H1 (cell line): ENCODE measurements at regions of chr11 and their contacts with region 1.

Region 1: GRCh38 chr11:19814421-19814820 is 101.8 kb downstream of the NAV2 start:
- DNase-seq: no peak
- H3K4me3 ChIP-seq: no peak overlapping the region
- H3K27ac ChIP-seq: no peak overlapping the region
- H3K4me1 ChIP-seq: peaks cover 28 to 50% (median 42%) of the 10 kb centered on the region in 4 experiments
- H3K27me3 ChIP-seq: no peaks in the 10 kb centered on the region
- CTCF ChIP-seq: peak; percentile 53 to 75 (median 69)
- EP300 ChIP-seq: no peak
- POLR2A ChIP-seq: no peak
- RAD21 ChIP-seq: peak; percentile 80 to 86

Region 2: GRCh38 chr11:19664896-19665548 is 149.4 kb before region 1 on chr11:
- CTCF ChIA-PET with region 1: no interaction called
- POLR2A ChIA-PET with region 1: no interaction called
- DNase-seq: no peak
- H3K4me3 ChIP-seq: no peak overlapping the region
- H3K27ac ChIP-seq: no peak overlapping the region
- H3K4me1 ChIP-seq: no peaks in the 10 kb centered on the region
- H3K27me3 ChIP-seq: no peaks in the 10 kb centered on the region
- CTCF ChIP-seq: no peak
- EP300 ChIP-seq: no peak
- POLR2A ChIP-seq: no peak
- RAD21 ChIP-seq: no peak

Region 3: GRCh38 chr11:19777377-19778102 is 36.9 kb before region 1 on chr11:
- CTCF ChIA-PET with region 1: interaction called, 4 read pairs
- POLR2A ChIA-PET with region 1: interaction called, 10 read pairs
- DNase-seq: no peak
- H3K4me3 ChIP-seq: peak overlapping the region; percentile 84 to 96 (median 90)
- H3K27ac ChIP-seq: peak overlapping the region; percentile 92
- H3K4me1 ChIP-seq: peaks cover 17 to 43% (median 37%) of the 10 kb centered on the region in 4 experiments
- H3K27me3 ChIP-seq: no peaks in the 10 kb centered on the region
- CTCF ChIP-seq: no peak
- EP300 ChIP-seq: peak in 1 of 2 experiments; percentile 7; a peak in 1 of 3 replicates
- POLR2A ChIP-seq: peak; percentile 78 to 81
- RAD21 ChIP-seq: no peak

Region 4: DNA sequence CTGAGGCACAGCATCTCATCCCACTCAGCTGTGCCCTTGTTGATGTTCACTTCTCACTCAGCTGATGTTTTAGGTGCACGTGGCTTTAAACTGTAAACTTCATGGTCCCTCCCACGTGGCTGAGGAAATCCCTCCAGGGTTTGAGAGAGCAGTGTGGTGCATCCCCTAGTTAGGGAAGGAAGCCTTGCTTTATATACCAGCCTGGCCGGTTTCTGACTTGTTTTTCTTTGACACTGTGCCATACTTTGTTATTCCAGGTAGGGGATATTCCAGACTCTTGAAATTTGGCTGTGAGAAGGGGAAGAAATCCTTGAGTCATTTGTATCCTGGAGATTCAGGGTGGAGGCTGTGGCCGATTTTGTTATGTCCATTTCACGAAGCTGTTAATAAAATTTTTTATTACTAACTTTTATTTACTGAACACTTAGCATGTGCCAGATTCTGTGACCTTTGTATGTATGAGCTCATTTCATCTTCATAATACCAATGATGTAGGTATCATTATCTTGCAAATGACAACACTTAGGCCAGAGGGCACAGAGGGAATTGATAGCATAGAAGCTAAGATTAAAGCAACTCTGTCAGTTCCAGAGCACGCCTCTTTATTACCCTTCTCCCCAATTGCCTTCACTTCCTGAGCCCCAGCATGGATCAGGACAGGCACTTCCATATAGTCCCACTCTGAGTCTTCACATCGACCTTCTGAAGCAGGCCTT is 14.8 kb after region 1 on chr11:
- CTCF ChIA-PET with region 1: interaction called, 44 read pairs
- POLR2A ChIA-PET with region 1: interaction called, 37 read pairs
- DNase-seq: no peak
- H3K4me3 ChIP-seq: no peak overlapping the region
- H3K27ac ChIP-seq: 0 out of 2 replicates have a peak overlapping the region, but pooled peaks have one; percentile 17
- H3K4me1 ChIP-seq: peaks cover 2 to 35% (median 30%) of the 10 kb centered on the region in 4 experiments; a peak in 6 of 7 replicates
- H3K27me3 ChIP-seq: no peaks in the 10 kb centered on the region
- CTCF ChIP-seq: no peak
- EP300 ChIP-seq: no peak
- POLR2A ChIP-seq: no peak
- RAD21 ChIP-seq: no peak

Region 5: GRCh38 chr11:19846654-19847305 is 32.4 kb after region 1 on chr11:
- CTCF ChIA-PET with region 1: interaction called, 11 read pairs
- POLR2A ChIA-PET with region 1: interaction called, 11 read pairs
- DNase-seq: no peak
- H3K4me3 ChIP-seq: no peak overlapping the region
- H3K27ac ChIP-seq: no peak overlapping the region
- H3K4me1 ChIP-seq: peaks cover 0 to 12% (median 4%) of the 10 kb centered on the region in 4 experiments; a peak in 4 of 7 replicates
- H3K27me3 ChIP-seq: no peaks in the 10 kb centered on the region
- CTCF ChIP-seq: no peak
- EP300 ChIP-seq: no peak
- POLR2A ChIP-seq: no peak
- RAD21 ChIP-seq: no peak

Region 6: GRCh38 chr11:20042118-20042518 is 227.7 kb after region 1 on chr11:
- CTCF ChIA-PET with region 1: no interaction called
- POLR2A ChIA-PET with region 1: no interaction called
- DNase-seq: no peak
- H3K4me3 ChIP-seq: no peak overlapping the region
- H3K27ac ChIP-seq: no peak overlapping the region
- H3K4me1 ChIP-seq: peaks cover 4 to 12% (median 7%) of the 10 kb centered on the region in 4 experiments; a peak in 6 of 7 replicates
- H3K27me3 ChIP-seq: no peaks in the 10 kb centered on the region
- CTCF ChIP-seq: no peak
- EP300 ChIP-seq: no peak
- POLR2A ChIP-seq: no peak
- RAD21 ChIP-seq: no peak